ENCODE measurements at regions of chr11 and their contacts with region 1.

Region 1: GRCh38 chr11:31676280-31676982 is 134.7 kb downstream of the PAX6 start:
- DNase-seq: no peak
- ATAC-seq: no peak
- H3K4me3 ChIP-seq: no peak overlapping the region
- H3K27ac ChIP-seq: no peak overlapping the region
- H3K4me1 ChIP-seq: no peaks in the 10 kb centered on the region
- H3K27me3 ChIP-seq: no peaks in the 10 kb centered on the region
- CTCF ChIP-seq: no peak
- POLR2A ChIP-seq: no peak
- RAD21 ChIP-seq: no peak

Region 2: GRCh38 chr11:31387379-31387778 is 289.1 kb before region 1 on chr11:
- CTCF ChIA-PET with region 1: no interaction called
- POLR2A ChIA-PET with region 1: no interaction called
- dilution Hi-C with region 1: no loop called
- in situ Hi-C with region 1: no loop called
- intact Hi-C with region 1: no loop called
- DNase-seq: peak; percentile 16
- ATAC-seq: peak; percentile 59
- H3K4me3 ChIP-seq: no peak overlapping the region
- H3K27ac ChIP-seq: no peak overlapping the region
- H3K4me1 ChIP-seq: peaks cover 2% of the 10 kb centered on the region
- H3K27me3 ChIP-seq: no peaks in the 10 kb centered on the region
- CTCF ChIP-seq: no peak
- POLR2A ChIP-seq: no peak
- RAD21 ChIP-seq: no peak

Region 3: GRCh38 chr11:31690041-31690440 is 13.6 kb after region 1 on chr11:
- CTCF ChIA-PET with region 1: no interaction called
- POLR2A ChIA-PET with region 1: interaction called, 10 read pairs
- dilution Hi-C with region 1: no loop called
- in situ Hi-C with region 1: no loop called
- intact Hi-C with region 1: no loop called
- DNase-seq: peak; percentile 24
- ATAC-seq: no peak
- H3K4me3 ChIP-seq: no peak overlapping the region
- H3K27ac ChIP-seq: no peak overlapping the region
- H3K4me1 ChIP-seq: no peaks in the 10 kb centered on the region; the same call in 1 of the 2 replicates
- H3K27me3 ChIP-seq: no peaks in the 10 kb centered on the region
- CTCF ChIP-seq: no peak
- POLR2A ChIP-seq: no peak
- RAD21 ChIP-seq: no peak